Spleen (tissue), 13 donors: ENCODE measurements at regions of chr10 and their contacts with region 1.

Region 1: GRCh38 chr10:7410862-7411670 is at the start of gene SFMBT2:
- DNase-seq: peak; percentile 91
- H3K4me3 ChIP-seq: peak within 1 kb of the TSS; percentile 62 to 94 (median 82)
- H3K27ac ChIP-seq: peak within 1 kb of the TSS in 7 of 8 donors; percentile 75 to 87 (median 86)
- H3K4me1 ChIP-seq: peaks cover 18 to 70% (median 48%) of the 10 kb centered on the region in 6 donors
- H3K27me3 ChIP-seq: peaks cover 0 to 49% (median 20%) of the 10 kb centered on the region in 7 donors
- CTCF ChIP-seq: peak in 3 of 11 experiments; percentile 12 to 21 (median 13)
- POLR2A ChIP-seq: no peak
- total RNA-seq, gene SFMBT2: 28.4 to 47.7 (median 38.8) TPM

Region 2: GRCh38 chr10:6667679-6668270 is 743.3 kb before region 1 on chr10:
- intact Hi-C with region 1: loop called (anchors 10 kb)
- DNase-seq: no peak
- H3K4me3 ChIP-seq: no peak overlapping the region
- H3K27ac ChIP-seq: no peak overlapping the region
- H3K4me1 ChIP-seq: peaks cover 0 to 2% (median 0%) of the 10 kb centered on the region in 6 donors
- H3K27me3 ChIP-seq: peaks cover 0 to 12% (median 0%) of the 10 kb centered on the region in 7 donors
- CTCF ChIP-seq: peak in 7 of 11 experiments; percentile 25 to 40 (median 34)
- POLR2A ChIP-seq: no peak

Region 3: GRCh38 chr10:6838118-6838517 is 572.9 kb before region 1 on chr10:
- intact Hi-C with region 1: loop called (anchors 10 kb)
- DNase-seq: no peak
- H3K4me3 ChIP-seq: no peak overlapping the region
- H3K27ac ChIP-seq: no peak overlapping the region
- H3K4me1 ChIP-seq: no peaks in the 10 kb centered on the region
- H3K27me3 ChIP-seq: no peaks in the 10 kb centered on the region
- CTCF ChIP-seq: peak in 4 of 11 experiments; percentile 13 to 24 (median 20)
- POLR2A ChIP-seq: no peak

Region 4: GRCh38 chr10:7121154-7121810 is 289.8 kb before region 1 on chr10:
- intact Hi-C with region 1: loop called (anchors 10 kb)
- DNase-seq: peak; percentile 87
- H3K4me3 ChIP-seq: no peak overlapping the region
- H3K27ac ChIP-seq: no peak overlapping the region
- H3K4me1 ChIP-seq: peaks cover 0 to 9% (median 7%) of the 10 kb centered on the region in 6 donors
- H3K27me3 ChIP-seq: no peaks in the 10 kb centered on the region
- CTCF ChIP-seq: peak; percentile 46 to 85 (median 73)
- POLR2A ChIP-seq: no peak

Region 5: GRCh38 chr10:7260412-7260900 is 150.6 kb before region 1 on chr10:
- intact Hi-C with region 1: loop called (anchors 10 kb)
- DNase-seq: no peak
- H3K4me3 ChIP-seq: no peak overlapping the region
- H3K27ac ChIP-seq: peak overlapping the region in 4 of 8 donors; percentile 29 to 46 (median 38)
- H3K4me1 ChIP-seq: peaks cover 16 to 74% (median 48%) of the 10 kb centered on the region in 6 donors
- H3K27me3 ChIP-seq: no peaks in the 10 kb centered on the region
- CTCF ChIP-seq: peak; percentile 58 to 87 (median 82)
- POLR2A ChIP-seq: no peak